ENCODE measurements at regions of chr17 and their contacts with region 1.

Region 1: DNA sequence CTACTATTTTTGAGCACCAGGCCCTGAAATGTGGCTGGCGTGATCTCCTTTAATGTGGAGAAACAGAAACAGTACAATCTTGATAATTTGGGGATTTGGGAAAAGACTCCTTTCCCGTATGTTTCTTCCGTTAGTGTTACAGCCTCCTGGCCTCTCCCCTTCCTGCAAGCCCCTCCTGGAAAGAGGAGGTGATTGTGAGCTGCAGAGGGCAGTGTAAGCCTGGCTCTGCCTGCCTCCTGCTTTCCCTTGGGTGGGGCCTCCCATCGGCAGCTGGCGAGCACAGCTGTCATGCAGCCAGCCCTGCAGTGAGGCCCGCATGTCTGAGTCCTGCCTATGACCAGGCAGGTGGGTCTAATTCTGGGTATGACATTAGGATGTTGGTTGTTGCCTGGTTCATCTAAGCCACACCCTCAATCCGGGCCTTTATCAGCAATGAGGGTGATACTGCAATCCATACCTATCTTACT is 48.7 kb upstream of the WSB1 start:
- DNase-seq: peak; percentile 88
- H3K4me3 ChIP-seq: no peak overlapping the region
- H3K27ac ChIP-seq: peak overlapping the region; percentile 32
- H3K4me1 ChIP-seq: peaks cover 27% of the 10 kb centered on the region
- H3K27me3 ChIP-seq: no peaks in the 10 kb centered on the region
- CTCF ChIP-seq: peak; percentile 79 to 81
- POLR2A ChIP-seq: peak; percentile 55

Region 2: GRCh38 chr17:27256225-27257030 is 11.2 kb after region 1 on chr17:
- CTCF ChIA-PET with region 1: interaction called, 5 read pairs
- POLR2A ChIA-PET with region 1: no interaction called
- dilution Hi-C with region 1: no loop called
- intact Hi-C with region 1: loop called (anchors 1 kb)
- DNase-seq: peak; percentile 93
- H3K4me3 ChIP-seq: no peak overlapping the region
- H3K27ac ChIP-seq: peak overlapping the region; percentile 63
- H3K4me1 ChIP-seq: peaks cover 16% of the 10 kb centered on the region
- H3K27me3 ChIP-seq: no peaks in the 10 kb centered on the region
- CTCF ChIP-seq: no peak
- POLR2A ChIP-seq: no peak

Region 3: GRCh38 chr17:27284811-27285415 is 39.6 kb after region 1 on chr17:
- CTCF ChIA-PET with region 1: interaction called, 5 read pairs
- POLR2A ChIA-PET with region 1: no interaction called
- dilution Hi-C with region 1: no loop called
- intact Hi-C with region 1: loop called (anchors 1 kb)
- DNase-seq: peak; percentile 93
- H3K4me3 ChIP-seq: peak overlapping the region in 1 of 3 experiments; percentile 29
- H3K27ac ChIP-seq: peak overlapping the region; percentile 63
- H3K4me1 ChIP-seq: peaks cover 30% of the 10 kb centered on the region
- H3K27me3 ChIP-seq: no peaks in the 10 kb centered on the region
- CTCF ChIP-seq: no peak
- POLR2A ChIP-seq: peak; percentile 39

Region 4: GRCh38 chr17:27306276-27306835 is 61.1 kb after region 1 on chr17:
- CTCF ChIA-PET with region 1: interaction called, 23 read pairs
- POLR2A ChIA-PET with region 1: interaction called, 12 read pairs
- dilution Hi-C with region 1: no loop called
- intact Hi-C with region 1: no loop called
- DNase-seq: no peak
- H3K4me3 ChIP-seq: no peak overlapping the region
- H3K27ac ChIP-seq: no peak overlapping the region
- H3K4me1 ChIP-seq: peaks cover 4% of the 10 kb centered on the region
- H3K27me3 ChIP-seq: no peaks in the 10 kb centered on the region
- CTCF ChIP-seq: no peak
- POLR2A ChIP-seq: no peak

Region 5: GRCh38 chr17:27323524-27324206 is 78.4 kb after region 1 on chr17:
- CTCF ChIA-PET with region 1: interaction called, 19 read pairs
- POLR2A ChIA-PET with region 1: no interaction called
- dilution Hi-C with region 1: no loop called
- intact Hi-C with region 1: no loop called
- DNase-seq: peak; percentile 77
- H3K4me3 ChIP-seq: no peak overlapping the region
- H3K27ac ChIP-seq: no peak overlapping the region
- H3K4me1 ChIP-seq: peaks cover 12% of the 10 kb centered on the region
- H3K27me3 ChIP-seq: no peaks in the 10 kb centered on the region
- CTCF ChIP-seq: no peak
- POLR2A ChIP-seq: peak; percentile 68

Region 6: GRCh38 chr17:27353461-27354050 is 108.3 kb after region 1 on chr17:
- CTCF ChIA-PET with region 1: interaction called, 3 read pairs
- POLR2A ChIA-PET with region 1: no interaction called
- dilution Hi-C with region 1: no loop called
- intact Hi-C with region 1: loop called (anchors 5 kb)
- DNase-seq: peak; percentile 97
- H3K4me3 ChIP-seq: peak overlapping the region in 1 of 3 experiments; percentile 20
- H3K27ac ChIP-seq: peak overlapping the region; percentile 99
- H3K4me1 ChIP-seq: peaks cover 40% of the 10 kb centered on the region
- H3K27me3 ChIP-seq: no peaks in the 10 kb centered on the region
- CTCF ChIP-seq: peak; percentile 61 to 99
- POLR2A ChIP-seq: peak; percentile 47

Region 7: DNA sequence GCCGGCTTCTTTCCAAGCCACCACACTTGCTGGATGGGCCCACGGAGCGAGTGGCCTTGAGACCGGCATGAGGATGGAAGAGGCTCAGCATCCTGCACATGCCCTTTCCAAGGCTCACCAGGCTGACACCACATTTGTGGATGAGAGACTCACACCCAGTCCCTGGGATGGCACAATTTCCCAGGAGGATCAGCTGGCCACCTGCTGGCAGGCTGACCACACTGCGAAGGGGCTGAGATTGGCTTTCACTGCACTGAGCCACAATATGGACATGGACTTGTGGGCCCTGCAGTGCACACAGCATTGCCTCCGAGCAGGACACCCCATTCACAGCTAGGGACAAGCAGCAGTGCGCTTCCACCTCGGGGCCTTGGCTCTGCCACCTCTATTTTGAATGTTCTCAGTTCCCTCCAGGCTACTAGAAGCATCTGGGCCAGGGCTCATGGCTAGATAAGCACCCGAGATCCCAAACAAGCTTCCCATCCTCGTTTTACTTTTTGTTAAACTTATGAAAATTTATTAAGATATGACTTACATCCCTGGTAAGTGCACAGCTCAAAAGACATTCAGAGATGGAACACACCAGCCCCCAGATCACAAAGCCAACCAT is 185.7 kb after region 1 on chr17:
- CTCF ChIA-PET with region 1: no interaction called
- POLR2A ChIA-PET with region 1: no interaction called
- dilution Hi-C with region 1: no loop called
- intact Hi-C with region 1: loop called (anchors 1 kb)
- DNase-seq: peak; percentile 74
- H3K4me3 ChIP-seq: no peak overlapping the region
- H3K27ac ChIP-seq: no peak overlapping the region
- H3K4me1 ChIP-seq: no peaks in the 10 kb centered on the region
- H3K27me3 ChIP-seq: no peaks in the 10 kb centered on the region
- CTCF ChIP-seq: peak; percentile 82 to 93
- POLR2A ChIP-seq: no peak

Measured in endothelial cell of umbilical vein (primary cell).